Aorta (tissue), 5 donors: ENCODE measurements at regions of chr4 and their contacts with region 1.

Region 1: DNA sequence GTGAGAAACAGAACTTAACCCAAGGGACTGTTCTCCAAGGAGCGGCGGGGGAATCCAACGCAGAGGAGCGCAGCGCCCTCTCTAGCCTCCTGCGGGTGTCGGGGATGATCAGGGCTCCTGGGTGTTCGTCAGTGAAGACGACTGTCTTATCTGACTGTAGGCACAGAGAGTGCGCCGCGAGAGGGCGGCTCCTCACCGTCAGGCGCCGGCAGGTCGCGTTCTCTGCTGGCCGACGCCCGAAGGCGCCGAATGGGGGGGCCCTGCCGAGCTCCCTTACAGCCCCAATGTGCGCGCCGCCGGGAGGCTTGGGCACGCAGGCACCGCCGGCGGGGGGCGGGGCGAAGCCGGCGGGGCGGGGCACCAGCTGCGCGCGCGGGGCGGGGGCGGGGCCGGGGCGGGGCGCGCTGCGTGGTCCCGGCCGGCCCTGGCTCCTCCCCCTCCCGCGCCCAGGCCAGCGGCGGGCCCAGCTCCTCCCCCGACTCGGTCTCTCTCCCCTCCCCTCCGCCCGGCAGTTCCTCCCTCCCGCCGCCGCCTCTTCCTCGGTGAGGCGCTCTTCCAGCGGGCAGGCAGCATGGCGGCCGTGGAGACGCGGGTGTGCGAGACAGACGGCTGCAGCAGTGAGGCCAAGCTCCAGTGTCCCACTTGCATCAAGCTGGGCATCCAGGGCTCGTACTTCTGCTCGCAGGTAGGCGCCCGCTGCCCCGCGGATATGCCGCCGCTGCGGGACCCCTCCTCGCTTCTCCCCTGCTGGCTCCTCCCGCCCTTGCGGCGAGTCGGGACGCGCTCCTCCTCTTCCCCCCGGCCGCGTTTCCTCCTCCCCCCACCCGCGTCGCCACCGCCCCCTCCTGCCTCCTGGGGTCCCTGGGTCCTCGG is at the start of gene METAP1:
- DNase-seq: peak; percentile 95 to 96
- ATAC-seq: peak; percentile 98
- H3K4me3 ChIP-seq: peak within 1 kb of the TSS; percentile 97 to 99
- H3K27ac ChIP-seq: peak within 1 kb of the TSS; percentile 76 to 81
- H3K4me1 ChIP-seq: no peaks in the 10 kb centered on the region
- H3K27me3 ChIP-seq: no peaks in the 10 kb centered on the region
- total RNA-seq, gene METAP1: 57.2 to 61.4 TPM

Region 2: DNA sequence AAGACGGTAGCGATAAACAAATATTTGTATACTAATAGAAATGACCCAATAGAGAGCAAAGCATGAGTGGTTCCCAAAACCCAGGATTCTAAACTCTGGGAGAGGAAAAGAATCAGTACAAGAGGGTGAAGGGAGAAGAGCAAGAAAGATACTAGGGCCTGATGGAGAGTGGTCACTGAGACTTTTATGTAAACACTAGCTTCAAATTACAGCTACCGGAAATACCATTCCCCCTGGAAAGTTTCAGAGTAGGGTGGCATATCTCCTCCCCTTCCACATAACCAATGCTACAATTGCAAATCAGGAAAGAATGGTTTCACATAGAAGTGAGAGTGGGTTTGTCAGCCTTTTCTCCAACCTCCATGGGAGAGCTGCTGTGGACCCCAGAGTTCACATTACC is 143.6 kb before region 1 on chr4:
- intact Hi-C with region 1: no loop called
- DNase-seq: no peak
- ATAC-seq: no peak
- H3K4me3 ChIP-seq: no peak overlapping the region
- H3K27ac ChIP-seq: no peak overlapping the region
- H3K4me1 ChIP-seq: no peaks in the 10 kb centered on the region
- H3K27me3 ChIP-seq: no peaks in the 10 kb centered on the region

Region 3: GRCh38 chr4:98928505-98929340 is 66.7 kb before region 1 on chr4 and contains the start of gene EIF4E:
- intact Hi-C with region 1: loop called (anchors 5 kb)
- DNase-seq: peak; percentile 98 to 99
- ATAC-seq: peak; percentile 98
- H3K4me3 ChIP-seq: peak within 1 kb of the TSS; percentile 72 to 84
- H3K27ac ChIP-seq: peak within 1 kb of the TSS; percentile 34 to 97
- H3K4me1 ChIP-seq: no peaks in the 10 kb centered on the region
- H3K27me3 ChIP-seq: no peaks in the 10 kb centered on the region
- total RNA-seq, gene EIF4E: 60.3 to 72.8 TPM

Region 4: GRCh38 chr4:98939892-98940298 is 55.5 kb before region 1 on chr4:
- intact Hi-C with region 1: loop called in 1 of 2 experiments (anchors 5 kb)
- DNase-seq: no peak
- ATAC-seq: peak; percentile 67
- H3K4me3 ChIP-seq: no peak overlapping the region
- H3K27ac ChIP-seq: no peak overlapping the region
- H3K4me1 ChIP-seq: no peaks in the 10 kb centered on the region
- H3K27me3 ChIP-seq: no peaks in the 10 kb centered on the region

Region 5: DNA sequence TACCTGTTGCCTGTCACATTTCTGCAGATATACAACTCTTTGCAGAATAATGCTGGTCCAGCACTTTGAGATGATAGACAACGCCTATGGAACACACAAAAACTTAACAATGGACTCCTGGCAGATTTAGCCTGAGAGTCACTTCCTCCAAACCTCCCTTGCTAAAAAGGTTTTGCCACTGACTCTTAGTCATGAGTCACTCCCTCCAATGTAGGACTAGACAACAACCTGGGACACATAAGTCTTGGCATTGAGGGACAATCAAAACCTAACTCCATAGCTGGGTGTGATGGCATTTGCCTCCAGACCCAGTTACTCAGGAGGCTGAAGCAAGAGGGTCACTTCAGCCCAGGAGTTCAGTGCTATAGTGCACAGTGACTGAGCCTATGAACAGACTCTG is 44.5 kb before region 1 on chr4:
- intact Hi-C with region 1: no loop called
- DNase-seq: no peak
- ATAC-seq: no peak
- H3K4me3 ChIP-seq: no peak overlapping the region
- H3K27ac ChIP-seq: no peak overlapping the region
- H3K4me1 ChIP-seq: peaks cover 0 to 3% of the 10 kb centered on the region in 2 donors
- H3K27me3 ChIP-seq: no peaks in the 10 kb centered on the region

Region 6: DNA sequence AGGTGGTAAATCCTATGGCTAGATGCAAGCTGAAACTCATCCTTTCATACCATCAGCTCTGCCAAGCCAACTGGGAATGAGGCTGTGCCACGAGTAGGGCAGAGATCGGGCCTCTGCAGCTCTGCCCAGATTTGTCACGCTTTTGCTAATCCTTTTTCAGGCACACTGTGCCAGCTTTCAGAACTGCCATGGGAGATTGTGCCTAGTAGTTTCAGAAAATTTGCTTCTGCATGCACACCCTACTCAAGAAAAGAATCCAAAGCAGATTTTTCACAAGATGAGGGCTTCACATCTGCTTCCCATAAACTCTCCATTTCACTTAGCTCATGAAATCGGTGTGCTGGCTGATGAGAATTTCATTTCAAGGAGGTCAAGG is 443.0 kb after region 1 on chr4:
- intact Hi-C with region 1: no loop called
- DNase-seq: no peak
- ATAC-seq: no peak
- H3K4me3 ChIP-seq: no peak overlapping the region
- H3K27ac ChIP-seq: no peak overlapping the region
- H3K4me1 ChIP-seq: no peaks in the 10 kb centered on the region
- H3K27me3 ChIP-seq: no peaks in the 10 kb centered on the region